Common myeloid progenitor, CD34-positive (primary cell): ENCODE measurements at regions of chr1 and their contacts with region 1.

Region 1: DNA sequence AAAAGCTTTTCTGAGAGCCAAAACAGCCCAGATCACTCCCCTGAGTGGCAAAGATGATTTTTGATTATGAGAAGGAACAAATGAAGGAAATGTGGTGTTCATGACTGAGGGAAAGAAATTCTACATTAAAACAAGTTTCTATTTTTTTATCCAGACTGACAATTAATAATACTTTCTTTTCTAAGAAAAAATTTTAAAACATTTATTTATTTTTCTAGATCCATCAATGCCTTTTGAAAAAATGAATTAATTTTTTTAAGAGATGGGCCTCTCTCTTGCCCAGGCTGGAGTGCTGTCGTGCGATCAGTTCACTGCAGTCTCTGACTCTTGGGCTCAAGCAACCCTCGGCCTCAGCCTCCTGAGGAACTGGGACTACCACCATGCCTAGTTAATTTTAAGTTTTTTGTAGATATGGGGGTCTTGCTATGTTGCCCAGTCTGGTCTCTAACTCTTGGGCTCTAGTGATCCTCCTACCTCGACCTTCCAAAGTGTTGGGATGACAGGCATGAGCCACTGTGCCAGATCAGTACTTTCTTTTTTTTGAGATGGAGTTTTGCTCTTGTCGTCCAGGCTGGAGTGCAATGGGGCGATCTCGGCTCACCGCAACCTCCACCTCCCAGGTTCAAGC is 11.2 kb upstream of the TXNIP start:
- DNase-seq: no peak
- H3K4me3 ChIP-seq: no peak overlapping the region
- H3K27ac ChIP-seq: peak overlapping the region in 1 of 2 experiments; percentile 82
- H3K4me1 ChIP-seq: peaks cover 0 to 13% (median 10%) of the 10 kb centered on the region in 4 experiments
- H3K27me3 ChIP-seq: no peaks in the 10 kb centered on the region

Region 2: DNA sequence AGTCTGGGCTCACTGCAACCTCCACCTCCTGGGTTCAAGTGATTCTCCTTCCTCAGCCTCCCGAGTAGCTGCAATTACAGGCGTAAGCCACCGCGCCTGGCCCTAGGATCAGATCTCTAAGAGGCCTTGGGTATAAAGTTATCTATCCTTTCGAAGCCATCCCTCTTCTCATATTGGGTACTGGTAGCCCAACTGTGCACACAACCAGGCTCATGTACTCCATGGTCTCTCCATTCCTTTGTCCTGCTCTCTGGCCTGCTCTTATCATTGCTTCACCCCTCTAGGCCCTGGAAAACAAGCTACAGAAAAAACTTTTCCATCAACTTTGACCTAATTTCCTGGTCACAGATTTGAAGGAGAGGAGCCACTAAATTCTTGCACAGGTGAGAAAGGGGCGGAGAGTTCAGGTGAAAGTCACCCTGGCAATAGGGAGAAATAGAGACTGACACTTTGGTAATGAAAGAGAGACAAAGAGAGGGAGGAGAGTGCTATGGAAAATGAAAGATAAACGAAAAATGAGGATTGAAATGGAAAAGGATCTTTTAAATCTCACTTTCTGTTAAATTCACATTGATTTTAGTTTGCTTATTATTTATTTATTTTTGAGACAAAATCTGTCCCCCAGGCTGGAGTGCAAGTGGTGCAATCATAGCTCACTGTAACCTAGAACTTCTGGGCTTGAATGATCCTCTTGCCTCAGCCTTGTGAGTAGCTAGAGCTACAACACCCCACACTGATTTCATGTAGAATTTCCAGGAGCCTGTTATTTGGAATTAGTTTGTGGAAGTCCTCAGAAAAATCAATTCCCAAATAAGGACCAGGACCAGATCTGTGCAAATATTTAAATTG is 17.1 kb before region 1 on chr1:
- CTCF ChIA-PET with region 1: interaction called, 23 read pairs
- POLR2A ChIA-PET with region 1: interaction called, 6 read pairs
- DNase-seq: no peak
- H3K4me3 ChIP-seq: no peak overlapping the region
- H3K27ac ChIP-seq: peak overlapping the region in 1 of 2 experiments; percentile 22
- H3K4me1 ChIP-seq: peaks cover 29 to 41% (median 36%) of the 10 kb centered on the region in 4 experiments
- H3K27me3 ChIP-seq: no peaks in the 10 kb centered on the region

Region 3: GRCh38 chr1:145996433-145997015 is 11.1 kb before region 1 on chr1 and contains the start of gene TXNIP:
- CTCF ChIA-PET with region 1: interaction called, 23 read pairs
- POLR2A ChIA-PET with region 1: no interaction called
- DNase-seq: peak; percentile 91 to 94 (median 91)
- H3K4me3 ChIP-seq: peak within 1 kb of the TSS; percentile 67 to 100 (median 95)
- H3K27ac ChIP-seq: peak within 1 kb of the TSS; percentile 64 to 93
- H3K4me1 ChIP-seq: peaks cover 36 to 67% (median 53%) of the 10 kb centered on the region in 4 experiments
- H3K27me3 ChIP-seq: no peaks in the 10 kb centered on the region

Region 4: DNA sequence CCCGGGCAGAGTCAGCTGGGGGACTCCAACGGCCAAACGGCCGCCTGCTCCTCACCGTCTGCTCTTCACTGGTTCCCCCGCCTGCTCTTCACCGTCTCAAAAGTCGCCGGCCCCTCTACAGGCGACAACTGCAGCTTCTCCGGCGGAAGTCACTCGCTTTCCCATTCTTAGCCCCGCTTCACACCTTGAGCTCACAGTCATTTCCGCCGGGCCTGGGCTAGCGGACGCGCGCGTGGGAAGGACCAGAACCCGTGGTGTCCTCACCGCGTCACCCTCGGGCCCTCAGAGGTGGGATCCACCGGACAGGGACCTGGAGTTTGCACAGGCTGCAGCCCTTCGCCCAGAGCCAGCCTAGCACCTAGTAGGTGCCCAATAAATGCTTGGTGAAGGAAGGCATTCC is 41.8 kb after region 1 on chr1:
- CTCF ChIA-PET with region 1: no interaction called
- POLR2A ChIA-PET with region 1: no interaction called
- DNase-seq: no peak
- H3K4me3 ChIP-seq: no peak overlapping the region
- H3K27ac ChIP-seq: no peak overlapping the region
- H3K4me1 ChIP-seq: peaks cover 0 to 6% (median 3%) of the 10 kb centered on the region in 4 experiments
- H3K27me3 ChIP-seq: no peaks in the 10 kb centered on the region